ENCODE measurements at regions of chr22 and their contacts with region 1.

Region 1: GRCh38 chr22:21867528-21868266 is at the start of gene MAPK1:
- DNase-seq: peak; percentile 95 to 96
- ATAC-seq: peak; percentile 98 to 99 (median 99)
- H3K4me3 ChIP-seq: peak within 1 kb of the TSS; percentile 92
- H3K27ac ChIP-seq: peak within 1 kb of the TSS; percentile 88
- H3K4me1 ChIP-seq: peaks cover 33% of the 10 kb centered on the region
- H3K27me3 ChIP-seq: no peaks in the 10 kb centered on the region
- CTCF ChIP-seq: peak; percentile 38
- total RNA-seq, gene MAPK1: 78.3 to 101 (median 96.9) TPM

Region 2: GRCh38 chr22:21712894-21713712 is 154.6 kb before region 1 on chr22:
- intact Hi-C with region 1: loop called in 1 of 2 experiments (anchors 5 kb)
- DNase-seq: peak; percentile 58 to 72
- ATAC-seq: peak; percentile 58 to 86 (median 78)
- H3K4me3 ChIP-seq: no peak overlapping the region
- H3K27ac ChIP-seq: peak overlapping the region; percentile 83
- H3K4me1 ChIP-seq: peaks cover 40% of the 10 kb centered on the region
- H3K27me3 ChIP-seq: no peaks in the 10 kb centered on the region
- CTCF ChIP-seq: peak; percentile 74

Region 3: DNA sequence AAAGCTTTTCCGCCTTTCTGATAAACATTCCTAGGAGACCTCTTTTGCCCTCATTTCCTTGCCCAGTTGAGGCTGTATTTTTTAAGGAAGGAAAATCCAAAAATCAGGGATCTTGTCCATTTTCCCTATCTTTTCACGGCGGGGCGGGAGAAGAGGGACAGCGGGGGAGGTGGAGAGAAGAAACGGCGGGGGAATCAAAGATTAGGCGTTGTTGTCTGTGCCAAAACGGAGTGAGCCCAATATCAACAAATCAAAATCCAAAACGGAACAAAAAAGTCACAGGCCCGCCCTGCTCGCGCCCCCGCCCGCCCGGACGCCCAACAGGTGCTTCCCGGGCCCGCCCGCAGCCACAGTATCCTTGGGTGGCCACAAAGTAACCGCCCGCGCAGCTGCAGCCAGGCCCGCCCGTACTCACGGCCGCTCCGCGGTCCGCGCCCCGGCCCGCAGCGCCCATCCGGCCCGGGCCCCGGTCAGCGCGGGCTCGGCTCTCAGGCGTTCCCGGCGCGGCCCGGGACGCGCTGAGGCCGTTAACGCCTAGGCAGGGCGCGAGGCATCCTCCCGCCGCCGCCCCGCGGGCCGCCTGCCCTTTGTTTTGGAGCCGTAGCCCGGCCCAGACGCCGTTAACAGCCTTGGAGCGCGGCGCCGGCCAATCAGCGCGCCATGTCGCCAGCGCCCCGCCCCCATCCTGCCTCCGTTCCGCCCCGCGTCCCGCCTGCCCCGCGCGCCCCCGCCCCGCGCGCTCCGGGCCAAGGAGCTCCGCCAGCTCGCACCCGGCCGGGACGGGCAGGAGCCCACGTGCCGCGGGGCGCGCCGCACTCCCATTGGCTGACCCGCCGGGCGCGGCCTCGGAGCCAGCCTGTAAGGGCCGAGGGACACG is 132.3 kb before region 1 on chr22 and contains the start of gene YPEL1:
- intact Hi-C with region 1: loop called in 1 of 2 experiments (anchors 10 kb)
- DNase-seq: peak; percentile 98
- ATAC-seq: peak; percentile 96 to 98 (median 97)
- H3K4me3 ChIP-seq: peak within 1 kb of the TSS; percentile 74
- H3K27ac ChIP-seq: peak within 1 kb of the TSS; percentile 92
- H3K4me1 ChIP-seq: peaks cover 20% of the 10 kb centered on the region
- H3K27me3 ChIP-seq: no peaks in the 10 kb centered on the region
- CTCF ChIP-seq: no peak
- total RNA-seq, gene YPEL1: 2.9 to 21.9 (median 10.3) TPM

Region 4: GRCh38 chr22:21796867-21797266 is 70.8 kb before region 1 on chr22:
- intact Hi-C with region 1: loop called (anchors 5 kb)
- DNase-seq: no peak
- ATAC-seq: peak; percentile 84 to 90 (median 86)
- H3K4me3 ChIP-seq: no peak overlapping the region
- H3K27ac ChIP-seq: peak overlapping the region; percentile 56
- H3K4me1 ChIP-seq: peaks cover 34% of the 10 kb centered on the region
- H3K27me3 ChIP-seq: no peaks in the 10 kb centered on the region
- CTCF ChIP-seq: no peak

Region 5: GRCh38 chr22:21829523-21829922 is 38.2 kb before region 1 on chr22:
- intact Hi-C with region 1: loop called in 1 of 2 experiments (anchors 5 kb)
- DNase-seq: no peak
- ATAC-seq: no peak
- H3K4me3 ChIP-seq: no peak overlapping the region
- H3K27ac ChIP-seq: peak overlapping the region; percentile 37
- H3K4me1 ChIP-seq: peaks cover 48% of the 10 kb centered on the region
- H3K27me3 ChIP-seq: no peaks in the 10 kb centered on the region
- CTCF ChIP-seq: no peak

Region 6: DNA sequence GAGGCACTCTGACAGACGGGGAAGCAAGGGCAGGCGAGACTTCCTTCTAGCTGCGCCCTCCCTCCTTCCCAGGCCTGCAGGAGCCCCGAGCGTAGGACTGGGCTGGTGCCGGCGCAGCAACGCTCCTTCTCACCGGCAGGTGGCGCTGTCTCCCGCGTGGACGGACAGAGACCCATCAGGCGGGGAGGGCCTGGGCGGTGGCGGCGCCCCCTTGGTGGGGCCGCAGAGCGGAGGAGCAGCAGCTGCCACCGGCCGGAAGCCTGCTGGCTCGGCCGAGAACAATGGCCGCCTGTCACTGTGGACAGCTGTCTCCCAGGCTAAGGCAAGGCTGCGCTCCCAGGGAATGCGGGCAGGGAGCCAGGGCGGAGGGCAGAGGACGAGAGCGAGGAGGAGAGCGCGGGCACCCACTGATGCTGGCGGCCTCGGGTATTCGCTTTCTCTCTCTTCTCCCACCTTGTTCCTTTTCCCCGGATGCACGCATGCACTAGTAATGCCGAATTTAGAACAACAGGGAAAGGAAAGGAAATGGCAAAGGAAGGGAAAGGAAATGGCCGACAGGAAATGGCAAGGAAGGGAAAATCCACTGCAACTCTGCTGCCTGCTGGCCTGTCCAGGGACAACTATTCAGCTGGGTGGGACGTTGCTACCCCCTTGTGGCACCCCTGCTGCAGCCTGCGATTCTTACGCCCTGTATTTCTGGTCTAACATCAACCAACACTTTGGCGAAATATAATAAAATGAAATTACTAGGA is 70.5 kb after region 1 on chr22:
- intact Hi-C with region 1: loop called in 1 of 2 experiments (anchors 5 kb)
- DNase-seq: peak; percentile 94 to 98
- ATAC-seq: peak; percentile 86 to 95 (median 92)
- H3K4me3 ChIP-seq: peak overlapping the region; percentile 59
- H3K27ac ChIP-seq: peak overlapping the region; percentile 84
- H3K4me1 ChIP-seq: peaks cover 35% of the 10 kb centered on the region
- H3K27me3 ChIP-seq: no peaks in the 10 kb centered on the region
- CTCF ChIP-seq: peak; percentile 100

Region 7: GRCh38 chr22:21952586-21953571 is 85.2 kb after region 1 on chr22 and contains the start of gene PPM1F:
- intact Hi-C with region 1: loop called in 1 of 2 experiments (anchors 5 kb)
- DNase-seq: peak; percentile 88 to 93
- ATAC-seq: peak; percentile 88 to 94 (median 92)
- H3K4me3 ChIP-seq: peak within 1 kb of the TSS; percentile 74
- H3K27ac ChIP-seq: peak within 1 kb of the TSS; percentile 76
- H3K4me1 ChIP-seq: peaks cover 26% of the 10 kb centered on the region
- H3K27me3 ChIP-seq: no peaks in the 10 kb centered on the region
- CTCF ChIP-seq: peak; percentile 92
- total RNA-seq, gene PPM1F: 11.9 to 29.5 (median 15.7) TPM

Region 8: GRCh38 chr22:22026157-22026831 is 158.6 kb after region 1 on chr22:
- intact Hi-C with region 1: no loop called
- DNase-seq: no peak
- ATAC-seq: no peak
- H3K4me3 ChIP-seq: no peak overlapping the region
- H3K27ac ChIP-seq: no peak overlapping the region
- H3K4me1 ChIP-seq: no peaks in the 10 kb centered on the region
- H3K27me3 ChIP-seq: peaks cover 0 to 4% (median 0%) of the 10 kb centered on the region in 3 donors
- CTCF ChIP-seq: no peak